HepG2 (cell line): ENCODE measurements at regions of chr22 and their contacts with region 1.

Region 1: DNA sequence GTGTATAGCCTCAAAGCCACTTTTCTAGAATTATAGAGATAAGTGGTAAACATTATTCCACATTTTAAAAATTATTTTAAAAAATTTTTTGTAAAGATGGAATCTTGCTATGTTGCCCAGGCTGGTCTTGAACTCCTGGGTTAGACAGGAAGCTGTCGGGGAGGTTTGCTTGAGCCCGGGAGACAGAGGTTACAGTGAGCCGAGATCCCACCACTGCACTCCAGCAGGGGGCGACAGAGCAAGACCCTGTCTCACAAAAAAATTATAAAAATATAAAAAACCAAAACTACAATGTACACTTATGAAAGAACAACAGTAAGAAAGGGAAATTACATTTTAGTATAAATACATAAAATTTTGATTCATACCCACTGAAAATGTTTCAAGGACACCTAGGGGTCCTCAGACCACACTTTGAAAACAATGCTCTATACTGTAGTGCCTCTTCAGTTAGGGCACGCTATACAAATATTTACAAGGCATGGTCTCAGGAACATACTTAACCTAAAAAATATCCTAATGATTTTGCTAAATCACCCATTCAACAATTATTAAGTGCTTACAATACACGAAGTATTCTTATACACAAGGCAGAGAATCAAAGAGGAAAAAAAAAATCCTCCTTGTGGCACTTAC is 111.2 kb downstream of the MRTFA start:
- DNase-seq: peak; percentile 31
- ATAC-seq: peak; percentile 67
- H3K4me3 ChIP-seq: no peak overlapping the region
- H3K27ac ChIP-seq: peak overlapping the region; percentile 30
- H3K4me1 ChIP-seq: peaks cover 34% of the 10 kb centered on the region
- H3K27me3 ChIP-seq: no peaks in the 10 kb centered on the region
- CTCF ChIP-seq: peak; percentile 64
- EP300 ChIP-seq: no peak
- POLR2A ChIP-seq: no peak
- RAD21 ChIP-seq: peak; percentile 46; the same call in 1 of the 2 replicates

Region 2: GRCh38 chr22:40449676-40450035 is 75.7 kb before region 1 on chr22:
- CTCF ChIA-PET with region 1: no interaction called
- POLR2A ChIA-PET with region 1: no interaction called
- in situ Hi-C with region 1: no loop called
- intact Hi-C with region 1: no loop called
- DNase-seq: no peak
- ATAC-seq: no peak
- H3K4me3 ChIP-seq: no peak overlapping the region
- H3K27ac ChIP-seq: no peak overlapping the region
- H3K4me1 ChIP-seq: no peaks in the 10 kb centered on the region
- H3K27me3 ChIP-seq: no peaks in the 10 kb centered on the region
- CTCF ChIP-seq: no peak
- EP300 ChIP-seq: no peak
- POLR2A ChIP-seq: no peak
- RAD21 ChIP-seq: no peak

Region 3: GRCh38 chr22:40567106-40567505 is 41.7 kb after region 1 on chr22:
- CTCF ChIA-PET with region 1: no interaction called
- POLR2A ChIA-PET with region 1: no interaction called
- in situ Hi-C with region 1: no loop called
- intact Hi-C with region 1: no loop called
- DNase-seq: no peak
- ATAC-seq: no peak
- H3K4me3 ChIP-seq: no peak overlapping the region
- H3K27ac ChIP-seq: no peak overlapping the region
- H3K4me1 ChIP-seq: peaks cover 27% of the 10 kb centered on the region
- H3K27me3 ChIP-seq: no peaks in the 10 kb centered on the region
- CTCF ChIP-seq: no peak
- EP300 ChIP-seq: no peak
- POLR2A ChIP-seq: no peak
- RAD21 ChIP-seq: no peak

Region 4: DNA sequence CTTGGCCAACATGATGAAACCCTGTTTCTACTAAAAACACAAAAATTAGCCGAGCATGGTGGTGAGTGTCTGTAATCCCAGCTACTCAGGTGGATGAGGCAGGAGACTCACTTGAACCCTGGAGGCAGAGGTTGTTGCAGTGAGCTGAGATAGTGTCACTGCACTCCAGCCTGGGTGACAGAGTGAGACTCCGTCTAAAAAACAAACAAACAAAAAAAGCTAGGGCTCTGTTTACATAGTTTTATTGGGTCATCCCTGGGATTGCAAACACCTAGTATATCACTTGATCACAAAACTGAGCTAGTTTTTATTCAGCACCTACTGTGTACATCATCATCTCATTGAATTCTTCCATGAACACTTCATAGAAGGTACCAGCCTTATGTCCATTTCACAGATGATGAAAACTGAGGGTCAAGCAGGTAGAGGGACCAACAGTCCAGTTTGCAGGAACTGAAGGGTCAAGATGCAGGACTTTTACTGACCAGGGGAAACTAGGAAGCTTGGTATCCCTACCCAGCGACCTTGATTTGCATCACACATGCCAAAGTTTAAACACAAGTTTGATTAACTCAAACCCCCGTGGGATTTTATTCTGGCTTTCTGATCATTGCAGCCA is 120.3 kb after region 1 on chr22:
- CTCF ChIA-PET with region 1: interaction called, 29 read pairs
- POLR2A ChIA-PET with region 1: interaction called, 6 read pairs
- in situ Hi-C with region 1: loop called (anchors 5 kb)
- intact Hi-C with region 1: loop called (anchors 1 kb)
- DNase-seq: no peak
- ATAC-seq: no peak
- H3K4me3 ChIP-seq: peak overlapping the region in 1 of 3 experiments; percentile 47; a peak in 1 of 6 replicates
- H3K27ac ChIP-seq: peak overlapping the region; percentile 79
- H3K4me1 ChIP-seq: peaks cover 28% of the 10 kb centered on the region
- H3K27me3 ChIP-seq: no peaks in the 10 kb centered on the region
- CTCF ChIP-seq: no peak
- EP300 ChIP-seq: no peak
- POLR2A ChIP-seq: no peak
- RAD21 ChIP-seq: no peak